Activated CD4-positive, alpha-beta T cell treated with anti-CD3 and anti-CD28 coated beads for 36 hours (primary cell): ENCODE measurements at regions of chr10 and their contacts with region 1.

Region 1: GRCh38 chr10:86399879-86400704 is 33.5 kb upstream of the GRID1 start:
- DNase-seq: peak; percentile 98
- ATAC-seq: peak; percentile 94
- H3K4me3 Mint-ChIP-seq: peak overlapping the region; percentile 83
- H3K27ac Mint-ChIP-seq: peak overlapping the region; percentile 89
- H3K4me1 Mint-ChIP-seq: peaks cover 21% of the 10 kb centered on the region
- H3K27me3 Mint-ChIP-seq: no peaks in the 10 kb centered on the region

Region 2: DNA sequence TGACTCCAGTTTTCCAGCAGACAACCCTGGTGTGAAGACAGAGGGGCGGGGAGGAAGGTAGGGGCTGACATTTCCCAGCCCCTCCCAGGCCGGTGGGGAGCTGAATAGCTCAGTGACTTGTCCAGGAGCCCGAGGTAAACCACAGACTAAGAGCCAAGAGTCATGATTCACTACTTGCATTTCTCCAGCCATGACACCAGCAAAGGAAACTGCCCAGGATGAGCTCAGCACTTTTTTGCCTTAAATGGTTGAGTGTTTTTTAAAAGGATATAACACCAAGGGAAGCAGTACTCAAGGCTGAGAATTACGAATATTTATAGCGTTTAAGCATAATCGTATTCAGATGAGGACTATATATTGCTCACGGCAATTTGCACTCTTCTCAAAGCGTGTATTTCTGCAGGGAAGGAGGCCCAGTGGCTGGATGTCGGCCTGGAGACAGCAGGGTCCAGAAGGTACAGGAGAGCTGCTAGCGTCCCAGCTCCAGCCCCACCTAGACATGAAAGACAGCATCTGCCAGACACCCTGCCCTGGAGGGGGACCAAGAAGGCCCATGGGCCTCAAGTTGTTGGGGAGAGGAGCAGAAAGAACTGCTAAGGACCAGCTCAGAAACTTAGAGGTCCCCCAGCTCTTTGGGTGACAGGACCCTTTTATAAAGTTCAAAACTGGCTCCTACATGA is 174.8 kb before region 1 on chr10:
- CTCF ChIA-PET with region 1: no interaction called
- POLR2A ChIA-PET with region 1: no interaction called
- intact Hi-C with region 1: no loop called
- DNase-seq: no peak
- ATAC-seq: no peak
- H3K4me3 Mint-ChIP-seq: no peak overlapping the region
- H3K27ac Mint-ChIP-seq: no peak overlapping the region
- H3K4me1 Mint-ChIP-seq: no peaks in the 10 kb centered on the region
- H3K27me3 Mint-ChIP-seq: no peaks in the 10 kb centered on the region

Region 3: GRCh38 chr10:86411281-86411841 is 11.3 kb after region 1 on chr10:
- CTCF ChIA-PET with region 1: interaction called, 27 read pairs
- POLR2A ChIA-PET with region 1: interaction called, 6 read pairs
- intact Hi-C with region 1: loop called (anchors 1 kb)
- DNase-seq: peak; percentile 63
- ATAC-seq: peak; percentile 79
- H3K4me3 Mint-ChIP-seq: peak overlapping the region; percentile 54
- H3K27ac Mint-ChIP-seq: peak overlapping the region; percentile 93
- H3K4me1 Mint-ChIP-seq: peaks cover 48% of the 10 kb centered on the region
- H3K27me3 Mint-ChIP-seq: no peaks in the 10 kb centered on the region

Region 4: DNA sequence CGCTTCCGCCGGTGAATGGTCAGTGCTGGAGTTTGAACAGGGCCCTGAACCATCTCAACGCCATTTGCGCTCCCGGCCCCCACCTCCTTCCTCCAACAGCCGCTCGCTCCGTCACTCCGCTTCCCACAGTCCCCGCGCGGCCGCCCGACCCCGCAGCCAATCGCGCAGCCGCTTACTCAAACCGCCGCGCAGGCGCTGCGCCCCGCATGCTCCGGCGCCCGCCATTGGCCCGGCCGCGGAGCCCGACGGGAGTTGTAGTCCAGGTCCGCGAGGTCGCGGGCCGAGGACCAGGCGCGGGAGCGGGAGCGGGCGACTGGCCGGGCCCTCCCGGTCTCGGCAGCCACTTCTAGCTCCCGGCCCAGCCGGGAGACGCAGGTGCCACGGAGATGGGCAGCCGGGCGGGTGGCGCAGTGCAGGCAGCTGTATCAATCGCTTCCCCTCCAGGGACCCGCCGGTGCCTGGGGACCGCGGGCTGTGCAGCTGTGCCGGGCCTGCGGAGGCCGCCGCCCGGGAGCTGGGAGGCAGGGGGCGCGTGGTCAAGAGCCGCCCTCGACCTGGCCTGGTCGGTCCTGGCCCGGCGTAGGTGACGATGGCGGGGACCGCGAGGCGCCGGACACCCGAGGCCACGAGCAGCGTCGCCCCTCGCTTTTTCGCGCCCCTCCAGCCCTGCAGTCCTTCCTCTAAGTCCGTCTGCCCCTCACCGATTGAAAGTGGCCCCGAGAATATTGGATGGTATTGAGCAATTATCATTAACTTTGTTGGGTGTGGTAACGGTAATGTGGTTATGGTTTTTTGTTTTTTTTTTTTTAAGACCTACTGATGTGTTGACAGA is 121.8 kb after region 1 on chr10 and contains the start of gene WAPL:
- CTCF ChIA-PET with region 1: interaction called, 8 read pairs
- POLR2A ChIA-PET with region 1: interaction called, 3 read pairs
- intact Hi-C with region 1: loop called (anchors 1 kb)
- DNase-seq: peak; percentile 97
- ATAC-seq: peak; percentile 97
- H3K4me3 Mint-ChIP-seq: peak within 1 kb of the TSS; percentile 82
- H3K27ac Mint-ChIP-seq: peak within 1 kb of the TSS; percentile 88
- H3K4me1 Mint-ChIP-seq: peaks cover 59% of the 10 kb centered on the region
- H3K27me3 Mint-ChIP-seq: no peaks in the 10 kb centered on the region
- total RNA-seq, gene WAPL: 37.4 to 43.2 TPM

Region 5: GRCh38 chr10:86585037-86585725 is 185.1 kb after region 1 on chr10:
- CTCF ChIA-PET with region 1: interaction called, 50 read pairs
- POLR2A ChIA-PET with region 1: interaction called, 7 read pairs
- intact Hi-C with region 1: loop called (anchors 1 kb)
- DNase-seq: peak; percentile 85
- ATAC-seq: peak; percentile 98
- H3K4me3 Mint-ChIP-seq: no peak overlapping the region
- H3K27ac Mint-ChIP-seq: no peak overlapping the region
- H3K4me1 Mint-ChIP-seq: peaks cover 2% of the 10 kb centered on the region
- H3K27me3 Mint-ChIP-seq: no peaks in the 10 kb centered on the region

Region 6: DNA sequence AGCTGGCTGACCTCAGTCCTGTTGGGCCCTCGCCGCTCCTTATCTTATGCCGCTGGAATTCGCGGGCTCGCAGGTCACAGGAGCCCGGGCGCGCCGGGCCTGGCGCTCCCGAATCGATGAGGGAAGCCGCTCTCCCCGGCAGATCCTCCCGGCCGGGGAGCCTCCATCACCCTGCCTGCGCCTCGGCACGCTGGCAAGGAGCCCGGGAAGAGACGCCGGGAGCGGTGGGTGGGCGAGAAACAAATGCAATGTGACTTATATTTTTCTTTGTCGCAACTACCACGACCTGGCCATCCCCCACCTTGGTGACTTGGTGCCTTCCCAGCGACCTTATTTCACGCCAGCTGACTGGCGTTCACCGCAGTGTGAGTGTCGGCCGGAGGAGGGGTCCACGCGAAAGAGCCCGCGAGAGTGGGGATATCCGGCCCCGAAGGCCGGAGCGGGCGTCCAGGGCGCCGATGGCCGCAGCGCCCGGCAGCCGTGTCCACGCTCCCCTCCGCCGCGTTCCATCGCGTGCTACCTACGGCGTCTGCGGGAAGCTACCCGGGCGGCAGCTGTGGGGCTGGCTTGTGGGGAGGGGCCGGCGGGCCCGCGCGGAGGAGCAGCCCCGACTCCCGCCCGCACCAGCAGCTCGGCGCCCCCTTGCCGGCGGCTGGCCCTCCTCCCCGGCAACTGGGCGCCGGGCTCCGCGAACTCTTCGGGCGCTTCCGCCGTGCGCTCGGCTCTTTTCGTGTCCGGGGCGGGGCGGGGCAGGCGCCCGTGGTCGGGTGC is 355.8 kb after region 1 on chr10:
- CTCF ChIA-PET with region 1: no interaction called
- POLR2A ChIA-PET with region 1: interaction called, 3 read pairs
- intact Hi-C with region 1: loop called in 1 of 2 experiments (anchors 2 kb)
- DNase-seq: peak; percentile 93
- ATAC-seq: peak; percentile 96
- H3K4me3 Mint-ChIP-seq: peak overlapping the region; percentile 85
- H3K27ac Mint-ChIP-seq: peak overlapping the region; percentile 72
- H3K4me1 Mint-ChIP-seq: peaks cover 33% of the 10 kb centered on the region
- H3K27me3 Mint-ChIP-seq: peaks cover 26% of the 10 kb centered on the region